Left cardiac atrium (tissue), 4 donors: ENCODE measurements at regions of chr17 and their contacts with region 1.

Region 1: DNA sequence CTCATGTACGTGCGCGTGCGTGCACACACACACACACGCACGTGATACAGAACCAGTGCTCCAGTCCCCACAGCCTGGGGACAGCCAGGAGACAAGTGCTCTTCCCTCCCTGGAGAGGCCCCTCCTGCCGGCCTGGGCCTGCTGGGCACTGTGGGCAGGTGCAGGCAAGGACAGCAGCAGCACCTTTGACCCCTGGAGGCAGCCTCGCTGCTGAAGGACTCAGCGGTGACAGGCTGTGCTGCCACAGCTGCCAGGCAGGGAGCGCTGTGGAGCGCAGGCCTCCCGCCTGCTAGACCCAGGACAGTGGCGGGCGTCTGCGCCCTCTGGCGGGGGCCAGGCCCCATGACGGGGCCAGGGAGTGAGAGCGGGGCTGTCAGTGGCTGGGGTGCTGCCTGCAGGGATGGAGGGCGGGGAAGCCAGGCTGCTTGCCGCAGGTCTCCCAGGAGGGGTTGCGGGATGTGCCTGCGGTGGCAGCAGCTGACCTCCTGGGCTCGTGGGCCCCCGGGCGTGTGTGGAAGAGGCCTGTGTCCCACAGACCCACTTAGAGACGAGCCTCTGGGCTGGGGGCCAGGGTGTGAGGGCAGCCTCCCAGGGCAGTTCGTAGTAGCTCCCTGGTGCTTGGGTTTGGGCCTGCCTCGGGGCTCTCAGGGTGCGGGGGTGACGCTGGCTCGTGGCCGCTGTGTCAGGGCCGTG is 63.5 kb upstream of the PVALEF start:
- DNase-seq: peak; percentile 83
- ATAC-seq: peak; percentile 70 to 88

Region 2: DNA sequence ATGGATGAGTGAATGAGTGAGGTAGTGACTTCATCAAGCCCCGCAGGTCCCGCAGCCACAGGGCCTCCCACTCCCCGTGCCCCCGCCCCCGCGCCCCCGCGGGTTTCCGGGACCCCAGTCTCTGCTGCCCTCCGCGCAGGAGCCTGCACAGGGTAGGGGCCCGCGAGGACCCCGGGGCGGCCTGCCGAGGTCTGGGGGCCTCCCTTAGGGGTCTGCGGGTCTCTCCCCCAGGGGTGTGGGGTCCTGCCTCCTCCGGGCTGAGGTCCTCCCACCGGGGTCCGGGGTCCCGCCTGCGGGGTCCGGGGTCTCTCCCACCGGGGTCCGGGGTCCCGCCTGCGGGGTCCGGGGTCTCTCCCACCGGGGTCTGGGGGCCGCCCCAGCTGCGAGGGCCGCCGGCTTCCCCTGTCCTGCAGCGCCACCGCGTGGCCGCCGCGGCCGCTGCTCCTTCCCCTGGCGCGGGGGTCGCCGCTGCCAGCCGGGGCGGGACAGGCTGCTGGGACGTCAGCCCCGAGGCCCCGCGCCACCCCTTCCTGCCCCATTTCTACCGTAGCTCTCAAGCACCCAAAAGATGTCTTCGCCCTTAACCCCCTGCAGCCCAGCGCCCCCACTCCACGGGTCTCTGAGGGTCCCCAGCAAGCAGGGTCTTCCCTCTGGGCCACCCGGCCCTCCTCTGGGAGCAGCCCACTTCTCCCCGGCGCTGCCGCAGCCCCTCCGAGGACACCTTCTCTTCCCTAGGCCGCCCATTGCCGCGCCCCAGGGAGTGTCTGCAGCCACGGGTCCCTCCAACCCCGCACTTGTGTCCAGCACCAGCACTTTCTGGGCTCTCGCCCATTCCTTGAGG is 120.5 kb before region 1 on chr17:
- intact Hi-C with region 1: loop called in 1 of 2 experiments (anchors 5 kb)
- DNase-seq: no peak
- ATAC-seq: peak; percentile 37 to 43

Region 3: GRCh38 chr17:80987941-80988461 is 113.8 kb before region 1 on chr17:
- intact Hi-C with region 1: loop called (anchors 2 to 5 kb)
- DNase-seq: no peak
- ATAC-seq: peak in 1 of 2 donors; percentile 6

Region 4: GRCh38 chr17:81027591-81028505 is 73.9 kb before region 1 on chr17:
- intact Hi-C with region 1: loop called (anchors 2 to 5 kb)
- DNase-seq: no peak
- ATAC-seq: no peak

Region 5: DNA sequence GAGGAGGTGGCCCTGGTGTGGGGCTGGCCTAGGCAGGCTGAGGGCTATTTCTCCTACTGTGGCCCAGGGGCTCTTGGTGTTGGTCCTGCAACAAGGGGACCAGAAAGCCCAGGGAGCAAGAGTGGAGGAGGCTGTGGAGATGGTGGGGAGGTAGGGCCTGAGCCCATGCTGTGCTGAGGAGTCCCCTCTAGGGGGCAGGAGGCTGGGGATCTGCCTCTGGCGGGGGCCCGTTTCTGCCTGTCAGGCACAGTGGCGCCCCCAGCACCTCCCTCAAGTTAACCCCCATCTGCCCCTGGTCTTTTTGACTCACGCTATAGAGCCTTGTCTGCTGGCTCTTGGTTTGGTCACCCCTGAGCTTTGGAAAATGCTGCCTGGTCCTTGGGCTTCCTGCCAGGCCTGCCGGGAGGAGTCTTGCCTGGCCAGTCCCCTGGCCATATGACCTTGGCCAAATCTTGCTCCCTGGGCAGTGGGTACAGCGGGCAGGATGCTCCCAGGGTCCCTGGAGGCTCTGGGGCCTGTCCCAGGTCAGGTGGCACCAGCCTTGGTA is 60.9 kb before region 1 on chr17:
- intact Hi-C with region 1: no loop called
- DNase-seq: no peak
- ATAC-seq: no peak